PC-3 (cell line): ENCODE measurements at regions of chr9 and their contacts with region 1.

Region 1: GRCh38 chr9:97696803-97697601 is at the start of gene XPA:
- DNase-seq: peak; percentile 92
- ATAC-seq: peak; percentile 91
- H3K4me3 ChIP-seq: peak within 1 kb of the TSS; percentile 83
- H3K27ac ChIP-seq: peak within 1 kb of the TSS; percentile 39
- H3K4me1 ChIP-seq: peaks cover 34% of the 10 kb centered on the region
- H3K27me3 ChIP-seq: no peaks in the 10 kb centered on the region
- CTCF ChIP-seq: no peak
- total RNA-seq, gene XPA: 7.4 and 9.4 TPM in 2 replicates

Region 2: GRCh38 chr9:97440160-97440559 is 256.8 kb before region 1 on chr9:
- CTCF ChIA-PET with region 1: no interaction called
- POLR2A ChIA-PET with region 1: no interaction called
- intact Hi-C with region 1: no loop called
- DNase-seq: no peak
- ATAC-seq: no peak
- H3K4me3 ChIP-seq: no peak overlapping the region
- H3K27ac ChIP-seq: no peak overlapping the region
- H3K4me1 ChIP-seq: no peaks in the 10 kb centered on the region
- H3K27me3 ChIP-seq: no peaks in the 10 kb centered on the region
- CTCF ChIP-seq: no peak

Region 3: GRCh38 chr9:97632985-97633858 is 63.8 kb before region 1 on chr9 and contains the starts of genes NCBP1 and TSTD2:
- CTCF ChIA-PET with region 1: no interaction called
- POLR2A ChIA-PET with region 1: interaction called, 11 read pairs
- intact Hi-C with region 1: no loop called
- DNase-seq: peak; percentile 94
- ATAC-seq: peak; percentile 91
- H3K4me3 ChIP-seq: peak within 1 kb of the TSS; percentile 96
- H3K27ac ChIP-seq: peak within 1 kb of the TSS; percentile 89
- H3K4me1 ChIP-seq: peaks cover 16% of the 10 kb centered on the region
- H3K27me3 ChIP-seq: no peaks in the 10 kb centered on the region
- CTCF ChIP-seq: no peak
- total RNA-seq, gene NCBP1: 22.6 and 23.0 TPM in 2 replicates
- total RNA-seq, gene TSTD2: 7.4 and 11.2 TPM in 2 replicates

Region 4: GRCh38 chr9:98002808-98003207 is 305.8 kb after region 1 on chr9:
- CTCF ChIA-PET with region 1: no interaction called
- POLR2A ChIA-PET with region 1: no interaction called
- intact Hi-C with region 1: no loop called
- DNase-seq: no peak
- ATAC-seq: no peak
- H3K4me3 ChIP-seq: no peak overlapping the region
- H3K27ac ChIP-seq: no peak overlapping the region
- H3K4me1 ChIP-seq: peaks cover under 1% of the 10 kb centered on the region; the same call in 1 of the 2 replicates
- H3K27me3 ChIP-seq: no peaks in the 10 kb centered on the region
- CTCF ChIP-seq: no peak